PC-9 (cell line): ENCODE measurements at regions of chr5 and their contacts with region 1.

Region 1: DNA sequence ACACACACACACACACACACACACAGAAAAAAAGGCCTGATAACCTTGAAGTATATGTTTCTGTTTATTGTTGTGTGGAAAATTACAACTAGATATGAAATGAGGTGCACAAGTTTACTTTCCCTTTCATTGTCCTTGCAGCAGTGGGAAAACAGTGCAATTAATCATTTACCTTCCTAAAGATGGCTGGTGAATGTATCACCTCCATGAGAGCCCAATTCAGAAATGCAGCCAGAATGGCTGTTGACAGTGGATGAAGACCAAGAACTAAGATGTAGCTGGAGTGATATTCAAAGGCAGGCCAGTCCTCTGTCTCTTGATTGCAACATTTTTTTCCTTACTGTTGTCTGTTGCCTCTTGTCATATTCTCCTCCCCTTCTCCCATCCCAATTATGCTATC is 49.6 kb upstream of the EIF4EBP3 start:
- DNase-seq: no peak
- H3K4me3 ChIP-seq: no peak overlapping the region
- H3K27ac ChIP-seq: no peak overlapping the region
- H3K4me1 ChIP-seq: 0 out of 2 replicates have a peak, but pooled peaks cover 3% of the 10 kb centered on the region
- H3K27me3 ChIP-seq: no peaks in the 10 kb centered on the region
- CTCF ChIP-seq: no peak

Region 2: GRCh38 chr5:140054086-140054689 is 443.7 kb before region 1 on chr5:
- CTCF ChIA-PET with region 1: no interaction called
- POLR2A ChIA-PET with region 1: no interaction called
- intact Hi-C with region 1: no loop called
- DNase-seq: no peak
- H3K4me3 ChIP-seq: no peak overlapping the region
- H3K27ac ChIP-seq: no peak overlapping the region
- H3K4me1 ChIP-seq: no peaks in the 10 kb centered on the region
- H3K27me3 ChIP-seq: peaks cover 43% of the 10 kb centered on the region
- CTCF ChIP-seq: no peak

Region 3: DNA sequence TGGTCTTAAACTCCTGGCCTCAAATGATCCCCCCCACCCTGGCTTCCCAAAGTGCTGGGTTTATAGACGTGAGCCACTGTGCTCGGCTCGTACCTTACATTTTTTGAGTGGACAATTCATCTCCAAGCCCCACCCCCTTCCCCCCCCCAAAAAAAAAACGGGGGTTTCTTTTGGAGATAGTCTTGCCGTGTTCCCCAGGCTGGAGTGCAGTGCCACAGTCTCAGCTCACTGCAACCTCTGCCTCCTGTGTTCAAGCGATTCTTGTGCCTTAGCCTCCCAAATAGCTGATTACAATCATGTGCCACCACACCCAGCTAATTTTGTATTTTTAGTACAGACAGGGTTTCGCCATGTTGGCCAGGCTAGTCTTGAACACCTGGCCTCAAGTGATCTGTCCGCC is 65.0 kb before region 1 on chr5:
- CTCF ChIA-PET with region 1: no interaction called
- POLR2A ChIA-PET with region 1: no interaction called
- intact Hi-C with region 1: loop called (anchors 10 kb)
- DNase-seq: no peak
- H3K4me3 ChIP-seq: no peak overlapping the region
- H3K27ac ChIP-seq: no peak overlapping the region
- H3K4me1 ChIP-seq: no peaks in the 10 kb centered on the region
- H3K27me3 ChIP-seq: no peaks in the 10 kb centered on the region
- CTCF ChIP-seq: no peak

Region 4: GRCh38 chr5:140509898-140510297 is 12.0 kb after region 1 on chr5:
- CTCF ChIA-PET with region 1: interaction called, 20 read pairs
- POLR2A ChIA-PET with region 1: no interaction called
- intact Hi-C with region 1: no loop called
- DNase-seq: no peak
- H3K4me3 ChIP-seq: no peak overlapping the region
- H3K27ac ChIP-seq: no peak overlapping the region
- H3K4me1 ChIP-seq: no peaks in the 10 kb centered on the region
- H3K27me3 ChIP-seq: no peaks in the 10 kb centered on the region
- CTCF ChIP-seq: no peak

Region 5: DNA sequence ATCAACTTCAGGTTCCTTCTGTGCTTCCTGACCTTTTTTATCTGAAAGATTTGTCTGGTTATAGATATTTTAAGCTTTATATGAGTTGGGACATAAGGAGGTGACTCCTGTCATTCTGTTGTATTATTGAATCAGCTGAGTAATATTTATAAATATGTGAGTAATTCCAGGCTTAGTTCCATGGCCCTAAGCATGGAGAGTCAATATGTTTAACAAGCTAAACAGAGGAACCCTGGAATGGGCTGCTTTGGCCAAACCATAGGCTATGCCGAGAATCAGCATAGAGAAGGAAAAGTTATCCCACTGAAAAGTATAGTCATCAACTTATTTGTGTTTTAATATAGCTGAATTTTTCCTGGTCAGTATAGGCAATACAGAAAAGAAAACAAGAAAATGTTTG is 42.3 kb after region 1 on chr5:
- CTCF ChIA-PET with region 1: no interaction called
- POLR2A ChIA-PET with region 1: no interaction called
- intact Hi-C with region 1: no loop called
- DNase-seq: no peak
- H3K4me3 ChIP-seq: no peak overlapping the region
- H3K27ac ChIP-seq: no peak overlapping the region
- H3K4me1 ChIP-seq: no peaks in the 10 kb centered on the region
- H3K27me3 ChIP-seq: no peaks in the 10 kb centered on the region
- CTCF ChIP-seq: no peak